ENCODE measurements at regions of chr17 and their contacts with region 1.

Region 1: DNA sequence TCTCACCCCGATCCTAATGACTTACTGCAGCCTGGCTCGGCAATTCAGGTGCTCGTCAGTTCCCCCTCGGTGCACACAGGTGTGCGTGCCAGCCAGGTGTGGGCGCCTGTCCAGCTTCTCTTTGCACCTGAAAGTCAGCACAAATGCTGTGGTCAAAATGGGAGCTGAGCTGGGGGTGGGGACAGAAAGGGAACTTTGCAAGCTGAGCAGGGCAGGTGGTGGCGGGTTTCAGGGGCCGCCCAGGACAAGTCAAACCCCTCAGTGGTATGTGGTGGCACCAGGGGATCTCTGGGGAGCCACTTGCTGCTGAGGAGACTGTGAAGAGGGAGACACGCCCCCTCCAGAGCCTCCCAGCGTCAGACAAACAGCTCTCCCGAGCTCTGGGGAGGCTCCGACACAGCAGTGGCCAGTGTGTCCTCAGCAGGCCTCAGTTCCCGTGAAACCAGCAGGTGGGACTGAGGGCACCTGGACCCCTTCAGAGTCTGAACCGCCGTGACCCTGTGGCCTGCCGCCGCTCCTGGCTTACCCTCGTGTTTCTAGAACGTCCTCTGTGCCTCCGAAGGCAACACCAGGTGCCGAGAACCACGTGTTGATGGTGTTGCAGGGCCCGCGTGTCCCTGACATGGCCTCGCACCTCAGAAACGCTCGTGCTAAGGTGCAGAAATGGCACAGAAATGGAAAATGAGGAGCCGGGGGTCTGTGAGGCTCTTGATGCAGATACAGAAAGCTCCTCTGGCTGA is 233.5 kb upstream of the TNRC6C start:
- DNase-seq: peak in 1 of 2 donors; percentile 34
- H3K4me3 ChIP-seq: no peak overlapping the region
- H3K27ac ChIP-seq: no peak overlapping the region
- H3K4me1 ChIP-seq: peaks cover 0 to 4% of the 10 kb centered on the region in 2 donors
- H3K27me3 ChIP-seq: no peaks in the 10 kb centered on the region
- CTCF ChIP-seq: no peak
- POLR2A ChIP-seq: no peak

Region 2: DNA sequence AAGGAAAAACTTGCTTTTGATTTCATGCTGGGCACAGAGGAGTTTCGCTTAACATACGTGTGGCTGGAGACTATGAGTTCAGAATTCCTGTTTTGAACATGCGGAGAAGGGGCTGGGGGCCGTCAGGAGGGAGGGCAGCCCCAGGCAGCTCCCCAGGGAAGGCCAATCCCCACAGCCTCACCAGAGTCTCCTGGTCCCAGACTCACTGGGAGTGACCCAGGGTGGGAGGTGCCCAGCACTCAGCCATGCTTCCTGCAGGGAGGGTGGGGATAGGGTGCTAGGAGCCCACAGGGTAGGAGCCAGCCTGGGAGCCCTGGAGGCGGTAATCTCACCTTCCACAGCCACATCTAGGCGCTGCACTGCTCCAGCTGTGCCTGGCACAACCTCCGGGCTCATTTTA is 1131.3 kb after region 1 on chr17:
- intact Hi-C with region 1: loop called (anchors 5 kb)
- DNase-seq: no peak
- H3K4me3 ChIP-seq: no peak overlapping the region
- H3K27ac ChIP-seq: no peak overlapping the region
- H3K4me1 ChIP-seq: no peaks in the 10 kb centered on the region
- H3K27me3 ChIP-seq: no peaks in the 10 kb centered on the region
- CTCF ChIP-seq: no peak
- POLR2A ChIP-seq: no peak

Measured in breast epithelium (tissue), 4 donors.